ENCODE measurements at regions of chr11 and their contacts with region 1.

Region 1: GRCh38 chr11:27242591-27242990 is 120.4 kb downstream of the CCDC34 start:
- DNase-seq: no peak
- H3K4me3 ChIP-seq: no peak overlapping the region
- H3K27ac ChIP-seq: no peak overlapping the region
- H3K4me1 ChIP-seq: no peaks in the 10 kb centered on the region
- CTCF ChIP-seq: no peak

Region 2: GRCh38 chr11:27229511-27230191 is 12.9 kb before region 1 on chr11:
- CTCF ChIA-PET with region 1: no interaction called
- POLR2A ChIA-PET with region 1: interaction called, 10 read pairs
- intact Hi-C with region 1: no loop called
- DNase-seq: no peak
- H3K4me3 ChIP-seq: no peak overlapping the region
- H3K27ac ChIP-seq: no peak overlapping the region
- H3K4me1 ChIP-seq: peaks cover 12% of the 10 kb centered on the region
- CTCF ChIP-seq: no peak